CD4-positive, alpha-beta T cell (primary cell): ENCODE measurements at regions of chr10 and their contacts with region 1.

Region 1: DNA sequence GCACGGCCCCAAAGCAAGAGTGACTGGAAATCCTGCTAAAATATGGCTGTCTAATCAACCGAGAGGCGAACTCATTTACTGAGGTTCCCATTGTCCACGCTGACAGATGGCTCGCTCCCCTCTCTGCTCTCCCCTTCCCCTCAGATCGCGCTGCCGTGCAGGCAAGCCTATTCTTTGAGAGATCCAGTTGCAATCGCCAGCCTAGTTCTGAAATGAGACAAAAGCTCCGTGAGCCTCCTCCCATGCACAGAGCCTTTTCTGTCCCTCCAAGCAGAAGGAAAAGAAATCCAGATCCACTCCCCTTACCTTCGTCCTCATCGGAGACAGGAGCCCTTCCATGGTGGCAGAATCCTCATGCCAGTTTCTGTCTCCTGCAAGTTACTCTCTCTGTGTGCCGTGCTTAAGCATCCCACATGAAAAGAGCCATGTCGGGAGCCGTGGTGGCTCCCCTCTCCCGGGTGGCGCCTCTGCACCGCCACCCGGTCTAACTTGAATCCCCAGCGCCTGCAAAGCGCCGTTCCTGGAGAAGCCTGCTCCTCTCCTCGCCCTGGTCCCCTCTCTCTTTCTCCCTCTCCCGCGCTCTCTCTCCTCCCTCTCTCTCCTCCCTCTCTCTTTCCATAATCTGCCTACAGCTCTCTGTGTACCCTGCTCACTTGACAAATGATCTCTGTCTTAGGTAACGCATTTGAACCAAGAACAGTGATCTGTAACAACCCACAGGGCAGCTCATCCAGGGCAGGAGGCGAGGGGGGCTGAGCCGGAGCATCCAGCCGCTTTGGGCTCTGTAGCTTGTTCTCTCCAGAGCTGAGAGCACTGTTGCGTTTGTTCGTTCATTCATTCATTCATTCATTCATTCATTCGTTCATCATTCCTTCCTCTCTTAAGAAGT is 156.8 kb downstream of the FRMD4A start:
- DNase-seq: peak in 7 of 14 experiments; percentile 2 to 42 (median 19)
- ATAC-seq: peak; percentile 41
- H3K4me3 ChIP-seq: peak overlapping the region; percentile 51
- H3K4me3 Mint-ChIP-seq: peak overlapping the region; percentile 77
- H3K27ac ChIP-seq: no peak overlapping the region
- H3K27ac Mint-ChIP-seq: no peak overlapping the region
- H3K4me1 ChIP-seq: peaks cover 13% of the 10 kb centered on the region
- H3K4me1 Mint-ChIP-seq: peaks cover 17% of the 10 kb centered on the region
- H3K27me3 ChIP-seq: peaks cover 32 to 60% of the 10 kb centered on the region in 2 experiments
- H3K27me3 Mint-ChIP-seq: peaks cover 100% of the 10 kb centered on the region
- CTCF ChIP-seq: no peak

Region 2: GRCh38 chr10:14185316-14186045 is 11.5 kb after region 1 on chr10:
- CTCF ChIA-PET with region 1: interaction called, 3 read pairs
- POLR2A ChIA-PET with region 1: interaction called, 19 read pairs
- intact Hi-C with region 1: no loop called
- DNase-seq: peak in 12 of 14 experiments; percentile 10 to 89 (median 26)
- ATAC-seq: peak; percentile 68
- H3K4me3 ChIP-seq: peak overlapping the region; percentile 46
- H3K4me3 Mint-ChIP-seq: peak overlapping the region; percentile 77
- H3K27ac ChIP-seq: peak overlapping the region; percentile 52 to 85
- H3K27ac Mint-ChIP-seq: peak overlapping the region; percentile 91
- H3K4me1 ChIP-seq: peaks cover 26% of the 10 kb centered on the region
- H3K4me1 Mint-ChIP-seq: peaks cover 20% of the 10 kb centered on the region
- H3K27me3 ChIP-seq: peaks cover 19 to 26% of the 10 kb centered on the region in 2 experiments
- H3K27me3 Mint-ChIP-seq: peaks cover 28% of the 10 kb centered on the region
- CTCF ChIP-seq: no peak

Region 3: GRCh38 chr10:14312014-14312413 is 138.1 kb after region 1 on chr10:
- CTCF ChIA-PET with region 1: no interaction called
- POLR2A ChIA-PET with region 1: no interaction called
- intact Hi-C with region 1: no loop called
- DNase-seq: no peak
- ATAC-seq: no peak
- H3K4me3 ChIP-seq: no peak overlapping the region
- H3K4me3 Mint-ChIP-seq: no peak overlapping the region
- H3K27ac ChIP-seq: no peak overlapping the region
- H3K27ac Mint-ChIP-seq: no peak overlapping the region
- H3K4me1 ChIP-seq: no peaks in the 10 kb centered on the region
- H3K4me1 Mint-ChIP-seq: no peaks in the 10 kb centered on the region
- H3K27me3 ChIP-seq: peaks cover 5 to 13% of the 10 kb centered on the region in 2 experiments
- H3K27me3 Mint-ChIP-seq: peaks cover 51% of the 10 kb centered on the region
- CTCF ChIP-seq: no peak